Left cardiac atrium (tissue), 4 donors: ENCODE measurements at regions of chr17 and their contacts with region 1.

Region 1: DNA sequence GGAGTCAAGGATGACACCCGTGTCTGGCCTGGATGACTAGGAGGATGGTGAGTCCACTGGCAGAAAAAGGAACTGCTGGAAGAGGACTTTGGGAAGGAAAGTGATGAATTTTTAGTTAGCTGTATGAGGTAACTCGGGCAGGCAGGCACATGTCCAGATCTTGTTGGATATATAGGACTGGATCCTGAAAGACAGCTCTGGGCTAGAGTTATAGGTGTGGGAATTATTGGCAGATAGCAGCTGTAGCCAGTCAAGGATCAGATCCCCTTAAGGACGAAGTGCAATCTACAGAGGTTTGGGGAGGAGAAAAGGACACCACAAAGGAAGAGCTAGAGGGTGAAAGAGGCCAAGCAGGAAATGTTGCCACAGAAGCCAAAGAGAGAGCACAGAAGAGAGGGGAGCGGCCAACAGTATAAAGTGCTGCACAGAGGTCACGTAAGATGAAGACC is 10.1 kb downstream of the CYB5D1 start:
- DNase-seq: no peak
- ATAC-seq: no peak

Region 2: DNA sequence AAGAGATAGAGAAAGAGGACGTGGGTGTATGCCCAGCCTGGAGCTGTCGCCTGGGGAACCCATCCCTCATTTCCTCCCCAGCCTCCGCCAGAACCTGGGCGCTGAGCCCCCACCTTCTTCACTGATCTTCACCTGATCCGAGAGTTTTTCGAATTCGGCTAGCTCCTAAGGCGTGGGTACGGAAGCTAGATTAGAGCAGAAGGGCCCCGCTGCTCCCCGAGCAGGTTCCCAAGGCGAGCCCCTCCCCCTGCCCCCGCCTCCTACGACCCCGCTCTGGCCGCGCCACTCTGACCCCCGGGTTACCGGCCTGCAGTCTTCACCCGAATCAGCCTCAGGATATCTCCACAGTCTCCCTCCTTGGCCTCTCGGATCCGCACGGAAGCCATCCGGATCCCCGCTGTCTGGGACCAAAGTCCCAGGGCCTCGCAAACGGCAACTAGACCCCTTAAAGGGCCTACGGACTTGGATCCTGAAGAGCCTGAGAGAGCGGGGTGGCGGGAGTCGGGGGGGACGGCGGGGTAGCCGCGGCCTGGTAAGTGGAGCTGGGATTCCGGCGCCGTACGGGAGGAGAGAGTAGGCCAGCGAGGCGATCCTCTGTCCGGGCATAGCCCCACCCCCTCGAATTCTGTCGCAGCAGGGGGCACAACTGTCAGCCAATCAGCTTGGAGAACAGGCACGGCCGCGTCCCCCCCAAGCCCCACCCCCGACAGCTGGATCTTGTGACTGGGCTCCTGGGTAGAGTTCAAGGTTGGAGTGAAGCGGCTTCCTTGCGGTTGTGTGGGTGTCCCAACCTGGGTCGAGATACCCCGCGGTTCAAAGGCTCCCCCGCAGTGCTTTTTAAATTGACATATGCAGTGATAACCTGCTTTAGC is 240.4 kb before region 1 on chr17 and contains the start of gene SAT2:
- intact Hi-C with region 1: no loop called
- DNase-seq: peak; percentile 96
- ATAC-seq: peak; percentile 99
- total RNA-seq, gene SAT2: 84.1 to 86.4 TPM

Region 3: DNA sequence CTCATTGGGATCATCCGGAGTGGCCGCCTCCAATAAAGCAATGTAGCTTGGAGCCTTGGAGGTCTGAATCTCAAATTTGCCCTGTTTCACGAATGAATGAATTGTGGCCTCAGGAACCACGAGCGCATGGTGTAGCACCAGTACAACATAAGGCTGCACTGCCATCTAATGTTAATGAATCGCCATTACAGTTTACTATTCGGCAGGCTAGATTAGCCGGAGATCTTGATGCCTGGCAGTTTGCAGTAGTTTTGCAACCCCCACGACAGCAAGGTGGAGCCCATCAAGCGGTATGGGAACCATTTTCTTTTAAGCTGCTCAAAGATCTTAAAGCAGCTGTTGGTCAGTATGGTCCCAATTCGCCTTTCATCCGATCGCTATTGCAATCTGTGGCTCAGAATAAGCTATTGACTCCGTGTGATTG is 189.8 kb after region 1 on chr17:
- intact Hi-C with region 1: loop called in 1 of 2 experiments (anchors 5 kb)
- DNase-seq: no peak
- ATAC-seq: peak; percentile 81 to 85